Activated CD4-positive, alpha-beta memory T cell treated with anti-CD3 and anti-CD28 coated beads for 36 hours (primary cell): ENCODE measurements at regions of chr4 and their contacts with region 1.

Region 1: GRCh38 chr4:106502106-106502699 is 133.6 kb upstream of the GIMD1 start:
- DNase-seq: peak; percentile 57
- H3K4me3 Mint-ChIP-seq: no peak overlapping the region
- H3K27ac Mint-ChIP-seq: no peak overlapping the region
- H3K4me1 Mint-ChIP-seq: no peaks in the 10 kb centered on the region
- H3K27me3 Mint-ChIP-seq: peaks cover 6% of the 10 kb centered on the region

Region 2: GRCh38 chr4:106222548-106222947 is 279.7 kb before region 1 on chr4:
- CTCF ChIA-PET with region 1: no interaction called
- POLR2A ChIA-PET with region 1: no interaction called
- intact Hi-C with region 1: no loop called
- DNase-seq: no peak
- H3K4me3 Mint-ChIP-seq: no peak overlapping the region
- H3K27ac Mint-ChIP-seq: no peak overlapping the region
- H3K4me1 Mint-ChIP-seq: no peaks in the 10 kb centered on the region
- H3K27me3 Mint-ChIP-seq: no peaks in the 10 kb centered on the region

Region 3: DNA sequence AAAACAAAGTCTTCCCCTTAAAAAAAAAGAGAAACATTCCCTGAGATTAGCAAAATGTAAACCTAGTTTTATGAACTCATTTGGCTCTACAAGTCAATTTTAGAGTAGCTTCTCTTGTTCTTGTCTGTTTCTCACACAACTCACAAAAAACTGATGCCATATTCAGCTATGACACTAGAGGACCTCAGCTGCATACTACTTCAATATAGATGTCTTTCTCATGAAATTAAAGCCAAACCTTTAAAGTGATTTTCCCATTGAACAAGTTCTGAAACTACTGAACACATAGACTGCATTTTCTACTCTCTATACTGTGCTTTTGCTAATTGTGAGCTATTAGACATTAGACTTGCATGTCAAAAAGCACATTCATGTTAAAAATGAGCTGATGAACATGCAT is 236.0 kb before region 1 on chr4:
- CTCF ChIA-PET with region 1: interaction called, 12 read pairs
- POLR2A ChIA-PET with region 1: no interaction called
- intact Hi-C with region 1: loop called (anchors 1 kb)
- DNase-seq: no peak
- H3K4me3 Mint-ChIP-seq: no peak overlapping the region
- H3K27ac Mint-ChIP-seq: no peak overlapping the region
- H3K4me1 Mint-ChIP-seq: peaks cover 3% of the 10 kb centered on the region
- H3K27me3 Mint-ChIP-seq: no peaks in the 10 kb centered on the region

Region 4: DNA sequence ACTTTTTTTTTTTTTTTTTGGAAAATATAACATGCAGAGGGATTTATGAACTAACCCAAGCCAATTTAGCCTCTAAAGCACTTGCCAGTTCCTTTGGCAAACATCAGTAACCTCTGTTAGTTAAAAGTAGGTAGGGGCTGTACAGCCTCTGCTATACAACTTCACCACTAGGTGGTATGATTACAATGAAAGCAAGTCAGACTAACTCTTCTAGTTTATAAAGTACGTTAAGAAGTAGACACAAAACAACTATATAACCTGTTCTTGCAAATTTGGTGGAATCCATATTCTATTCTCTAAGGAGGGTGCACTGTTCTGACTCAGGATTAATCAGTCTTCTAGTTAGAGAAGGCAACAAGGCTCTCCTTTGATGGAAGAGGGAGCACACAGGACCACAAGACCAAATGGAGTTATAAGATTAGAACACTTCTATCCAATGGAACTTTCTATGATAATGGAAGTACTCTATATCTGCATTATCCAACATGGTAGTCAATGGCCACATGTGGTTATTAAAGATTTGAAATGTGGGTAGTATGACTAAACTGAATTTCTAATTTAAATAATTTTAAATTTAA is 173.1 kb before region 1 on chr4:
- CTCF ChIA-PET with region 1: no interaction called
- POLR2A ChIA-PET with region 1: no interaction called
- intact Hi-C with region 1: loop called (anchors 1 kb)
- DNase-seq: no peak
- H3K4me3 Mint-ChIP-seq: no peak overlapping the region
- H3K27ac Mint-ChIP-seq: no peak overlapping the region
- H3K4me1 Mint-ChIP-seq: peaks cover 3% of the 10 kb centered on the region
- H3K27me3 Mint-ChIP-seq: no peaks in the 10 kb centered on the region

Region 5: GRCh38 chr4:106369456-106370060 is 132.6 kb before region 1 on chr4:
- CTCF ChIA-PET with region 1: interaction called, 8 read pairs
- POLR2A ChIA-PET with region 1: no interaction called
- intact Hi-C with region 1: loop called (anchors 1 kb)
- DNase-seq: peak; percentile 11
- H3K4me3 Mint-ChIP-seq: no peak overlapping the region
- H3K27ac Mint-ChIP-seq: no peak overlapping the region
- H3K4me1 Mint-ChIP-seq: no peaks in the 10 kb centered on the region
- H3K27me3 Mint-ChIP-seq: peaks cover 18% of the 10 kb centered on the region

Region 6: GRCh38 chr4:106541253-106541652 is 39.0 kb after region 1 on chr4:
- CTCF ChIA-PET with region 1: no interaction called
- POLR2A ChIA-PET with region 1: no interaction called
- intact Hi-C with region 1: no loop called
- DNase-seq: no peak
- H3K4me3 Mint-ChIP-seq: no peak overlapping the region
- H3K27ac Mint-ChIP-seq: no peak overlapping the region
- H3K4me1 Mint-ChIP-seq: no peaks in the 10 kb centered on the region
- H3K27me3 Mint-ChIP-seq: no peaks in the 10 kb centered on the region

Region 7: GRCh38 chr4:106551724-106552123 is 49.5 kb after region 1 on chr4:
- CTCF ChIA-PET with region 1: no interaction called
- POLR2A ChIA-PET with region 1: no interaction called
- intact Hi-C with region 1: no loop called
- DNase-seq: no peak
- H3K4me3 Mint-ChIP-seq: no peak overlapping the region
- H3K27ac Mint-ChIP-seq: no peak overlapping the region
- H3K4me1 Mint-ChIP-seq: no peaks in the 10 kb centered on the region
- H3K27me3 Mint-ChIP-seq: no peaks in the 10 kb centered on the region